AG04450 (cell line): ENCODE measurements at regions of chr5 and their contacts with region 1.

Region 1: GRCh38 chr5:131263648-131264450 is at the start of gene CDC42SE2:
- DNase-seq: peak; percentile 44
- H3K4me3 ChIP-seq: peak within 1 kb of the TSS; percentile 86
- H3K27ac ChIP-seq: peak within 1 kb of the TSS; percentile 49
- H3K27me3 ChIP-seq: no peaks in the 10 kb centered on the region
- CTCF ChIP-seq: no peak
- polyA plus RNA-seq, gene CDC42SE2: 20.6 and 27.4 TPM in 2 replicates

Region 2: GRCh38 chr5:130871346-130872086 is 392.3 kb before region 1 on chr5:
- CTCF ChIA-PET with region 1: no interaction called
- POLR2A ChIA-PET with region 1: no interaction called
- DNase-seq: no peak
- H3K4me3 ChIP-seq: no peak overlapping the region
- H3K27ac ChIP-seq: no peak overlapping the region
- H3K27me3 ChIP-seq: no peaks in the 10 kb centered on the region
- CTCF ChIP-seq: peak; percentile 63

Region 3: GRCh38 chr5:130966990-130967525 is 296.8 kb before region 1 on chr5:
- CTCF ChIA-PET with region 1: no interaction called
- POLR2A ChIA-PET with region 1: no interaction called
- DNase-seq: no peak
- H3K4me3 ChIP-seq: no peak overlapping the region
- H3K27ac ChIP-seq: no peak overlapping the region
- H3K27me3 ChIP-seq: no peaks in the 10 kb centered on the region
- CTCF ChIP-seq: no peak

Region 4: DNA sequence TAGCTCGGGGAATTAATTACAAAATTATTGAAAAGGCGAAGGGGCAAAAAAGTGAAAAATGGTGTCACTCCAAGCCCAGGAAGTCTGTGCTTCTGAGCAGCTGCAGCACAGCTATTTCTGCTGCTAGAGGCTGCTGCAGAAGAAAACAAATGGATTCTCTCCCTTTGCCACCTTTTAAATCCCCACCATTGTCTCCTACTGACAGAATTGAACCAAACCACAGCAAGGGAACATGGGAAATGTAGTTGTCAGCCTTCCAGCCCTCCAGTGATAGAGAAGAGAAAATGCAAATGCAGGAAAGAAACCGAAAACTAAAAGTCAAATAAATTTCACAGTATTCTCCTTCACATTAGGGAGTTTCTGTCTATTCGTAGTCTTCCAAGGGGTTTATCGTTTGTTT is 33.4 kb before region 1 on chr5:
- CTCF ChIA-PET with region 1: no interaction called
- POLR2A ChIA-PET with region 1: no interaction called
- DNase-seq: no peak
- H3K4me3 ChIP-seq: no peak overlapping the region
- H3K27ac ChIP-seq: no peak overlapping the region
- H3K27me3 ChIP-seq: no peaks in the 10 kb centered on the region
- CTCF ChIP-seq: no peak

Region 5: GRCh38 chr5:131382407-131383395 is 118.9 kb after region 1 on chr5:
- CTCF ChIA-PET with region 1: interaction called, 12 read pairs
- POLR2A ChIA-PET with region 1: interaction called, 7 read pairs
- DNase-seq: peak; percentile 8
- H3K4me3 ChIP-seq: no peak overlapping the region
- H3K27ac ChIP-seq: no peak overlapping the region
- H3K27me3 ChIP-seq: no peaks in the 10 kb centered on the region
- CTCF ChIP-seq: peak; percentile 49